PC-3 (cell line): ENCODE measurements at regions of chr16 and their contacts with region 1.

Region 1: GRCh38 chr16:67393035-67393787 is at the start of gene TPPP3:
- DNase-seq: no peak
- ATAC-seq: no peak
- H3K4me3 ChIP-seq: no peak within 1 kb of the TSS
- H3K27ac ChIP-seq: no peak within 1 kb of the TSS
- H3K4me1 ChIP-seq: peaks cover 5% of the 10 kb centered on the region; the same call in 1 of the 2 replicates
- H3K27me3 ChIP-seq: no peaks in the 10 kb centered on the region
- CTCF ChIP-seq: no peak
- total RNA-seq, gene TPPP3: not detected in 2 replicates

Region 2: DNA sequence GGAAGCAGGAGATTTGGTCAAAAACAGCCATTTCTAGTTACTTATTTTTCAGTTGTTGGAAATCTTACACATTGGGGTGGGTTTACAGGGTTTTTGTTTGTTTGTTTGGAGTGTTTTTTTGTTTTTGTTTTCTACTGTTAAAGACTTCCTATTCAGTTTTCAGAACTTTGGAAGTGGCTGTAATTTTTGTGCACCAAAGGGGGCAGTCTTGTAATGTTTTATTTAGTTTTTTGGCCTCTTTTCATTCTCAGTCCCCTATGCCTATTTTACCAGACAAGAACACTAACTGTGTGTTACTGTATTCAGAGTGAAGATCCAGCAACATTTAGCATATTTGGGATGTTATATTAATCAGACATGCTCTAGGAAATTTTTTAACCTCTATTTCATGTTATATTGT is 20.5 kb before region 1 on chr16:
- CTCF ChIA-PET with region 1: interaction called, 13 read pairs
- POLR2A ChIA-PET with region 1: no interaction called
- intact Hi-C with region 1: no loop called
- DNase-seq: peak; percentile 42
- ATAC-seq: no peak
- H3K4me3 ChIP-seq: no peak overlapping the region
- H3K27ac ChIP-seq: no peak overlapping the region
- H3K4me1 ChIP-seq: no peaks in the 10 kb centered on the region
- H3K27me3 ChIP-seq: no peaks in the 10 kb centered on the region
- CTCF ChIP-seq: peak; percentile 63

Region 3: GRCh38 chr16:67470359-67470758 is 77.1 kb after region 1 on chr16:
- CTCF ChIA-PET with region 1: no interaction called
- POLR2A ChIA-PET with region 1: no interaction called
- intact Hi-C with region 1: no loop called
- DNase-seq: no peak
- ATAC-seq: no peak
- H3K4me3 ChIP-seq: no peak overlapping the region
- H3K27ac ChIP-seq: no peak overlapping the region
- H3K4me1 ChIP-seq: peaks cover 4% of the 10 kb centered on the region
- H3K27me3 ChIP-seq: no peaks in the 10 kb centered on the region
- CTCF ChIP-seq: no peak